CD4-positive, alpha-beta memory T cell (primary cell): ENCODE measurements at regions of chr11 and their contacts with region 1.

Region 1: GRCh38 chr11:130434521-130435223 is 6.3 kb upstream of the ADAMTS8 start:
- DNase-seq: peak; percentile 60 to 68 (median 63)
- H3K4me3 ChIP-seq: peak overlapping the region; percentile 67 to 85
- H3K4me3 Mint-ChIP-seq: no peak overlapping the region
- H3K27ac ChIP-seq: no peak overlapping the region
- H3K27ac Mint-ChIP-seq: no peak overlapping the region
- H3K4me1 ChIP-seq: peaks cover 10% of the 10 kb centered on the region
- H3K4me1 Mint-ChIP-seq: peaks cover 7 to 17% (median 15%) of the 10 kb centered on the region in 4 donors
- H3K27me3 ChIP-seq: peaks cover 5% of the 10 kb centered on the region
- H3K27me3 Mint-ChIP-seq: peaks cover 9% of the 10 kb centered on the region in 2 donors

Region 2: GRCh38 chr11:130282111-130282510 is 152.6 kb before region 1 on chr11:
- CTCF ChIA-PET with region 1: no interaction called
- POLR2A ChIA-PET with region 1: no interaction called
- intact Hi-C with region 1: no loop called
- DNase-seq: no peak
- H3K4me3 ChIP-seq: no peak overlapping the region
- H3K4me3 Mint-ChIP-seq: no peak overlapping the region
- H3K27ac ChIP-seq: no peak overlapping the region
- H3K27ac Mint-ChIP-seq: no peak overlapping the region
- H3K4me1 ChIP-seq: no peaks in the 10 kb centered on the region
- H3K4me1 Mint-ChIP-seq: peaks cover 9 to 24% (median 12%) of the 10 kb centered on the region in 4 donors
- H3K27me3 ChIP-seq: no peaks in the 10 kb centered on the region
- H3K27me3 Mint-ChIP-seq: no peaks in the 10 kb centered on the region

Region 3: GRCh38 chr11:130420478-130421198 is 14.0 kb before region 1 on chr11:
- CTCF ChIA-PET with region 1: interaction called, 10 read pairs
- POLR2A ChIA-PET with region 1: no interaction called
- intact Hi-C with region 1: no loop called
- DNase-seq: no peak
- H3K4me3 ChIP-seq: no peak overlapping the region
- H3K4me3 Mint-ChIP-seq: no peak overlapping the region
- H3K27ac ChIP-seq: no peak overlapping the region
- H3K27ac Mint-ChIP-seq: no peak overlapping the region
- H3K4me1 ChIP-seq: no peaks in the 10 kb centered on the region
- H3K4me1 Mint-ChIP-seq: no peaks in the 10 kb centered on the region
- H3K27me3 ChIP-seq: no peaks in the 10 kb centered on the region
- H3K27me3 Mint-ChIP-seq: peaks cover 22 to 34% of the 10 kb centered on the region in 2 donors

Region 4: GRCh38 chr11:130894322-130895025 is 459.8 kb after region 1 on chr11:
- CTCF ChIA-PET with region 1: interaction called, 32 read pairs
- POLR2A ChIA-PET with region 1: no interaction called
- intact Hi-C with region 1: loop called (anchors 1 kb)
- DNase-seq: peak; percentile 43 to 60 (median 50)
- H3K4me3 ChIP-seq: no peak overlapping the region
- H3K4me3 Mint-ChIP-seq: no peak overlapping the region
- H3K27ac ChIP-seq: no peak overlapping the region
- H3K27ac Mint-ChIP-seq: peak overlapping the region in 2 of 7 donors; percentile 18 to 45
- H3K4me1 ChIP-seq: no peaks in the 10 kb centered on the region
- H3K4me1 Mint-ChIP-seq: peaks cover 8 to 11% (median 9%) of the 10 kb centered on the region in 4 donors
- H3K27me3 ChIP-seq: no peaks in the 10 kb centered on the region
- H3K27me3 Mint-ChIP-seq: no peaks in the 10 kb centered on the region